ENCODE measurements at regions of chr12 and their contacts with region 1.

Region 1: GRCh38 chr12:19847294-19848059 is 408.2 kb downstream of the AEBP2 start:
- DNase-seq: no peak

Region 2: GRCh38 chr12:19757317-19757877 is 90.1 kb before region 1 on chr12:
- intact Hi-C with region 1: loop called (anchors 5 kb)
- DNase-seq: no peak

Region 3: DNA sequence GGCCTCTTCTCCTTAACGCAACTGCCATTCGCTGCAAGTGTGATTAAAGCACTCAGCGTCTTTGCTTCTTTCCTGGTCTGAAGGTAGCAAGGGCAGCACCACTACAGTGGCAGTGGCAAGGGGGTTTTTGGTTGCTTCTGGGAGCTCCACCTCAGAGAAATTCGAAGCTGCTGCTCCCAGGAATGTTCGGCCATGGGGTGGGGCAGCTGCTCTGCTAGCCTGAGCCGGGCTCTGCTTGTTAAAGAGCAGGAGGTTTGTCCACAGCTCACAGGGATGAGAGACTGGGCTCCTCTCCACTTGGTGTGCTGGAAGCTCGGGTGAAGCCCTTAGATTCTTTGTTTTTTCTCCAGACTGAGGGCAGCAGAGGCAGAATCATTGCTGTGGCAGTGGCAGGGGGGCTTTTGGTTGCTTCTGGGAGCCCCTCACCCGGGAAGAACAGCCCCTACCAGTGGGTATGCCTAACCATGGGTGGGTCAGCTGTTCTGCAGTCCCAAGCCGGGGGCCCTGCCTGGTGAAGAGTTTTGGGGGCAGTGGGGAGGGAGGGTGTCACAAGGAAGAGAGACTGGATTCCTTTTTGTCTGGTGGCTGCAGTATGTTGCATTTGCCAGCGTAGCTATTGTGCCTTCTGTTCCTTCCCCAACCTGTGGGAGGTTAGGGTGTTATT is 68.0 kb before region 1 on chr12:
- intact Hi-C with region 1: loop called (anchors 5 kb)
- DNase-seq: no peak

Region 4: DNA sequence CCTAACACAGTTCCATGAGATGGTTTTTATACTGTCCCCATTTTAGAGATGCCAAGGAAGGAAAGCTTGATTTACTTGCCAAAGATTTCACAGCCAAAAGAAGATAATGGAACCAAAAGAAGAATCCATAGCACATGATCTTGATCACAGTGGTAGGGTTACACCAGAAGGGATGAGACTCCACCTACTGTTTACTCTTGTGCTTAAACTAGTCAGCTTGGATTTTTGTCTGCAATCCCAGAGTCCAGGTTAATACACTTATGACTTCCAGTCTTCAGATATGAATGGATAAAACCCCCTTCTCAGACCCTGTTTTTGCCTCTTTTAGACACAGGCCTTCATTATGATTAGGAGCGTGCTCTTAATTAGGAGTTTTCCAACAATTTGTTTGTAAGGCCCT is 46.0 kb after region 1 on chr12:
- intact Hi-C with region 1: loop called (anchors 5 kb)
- DNase-seq: no peak

Measured in cardiac septum (tissue), 1 donor.